ENCODE measurements at regions of chr1 and their contacts with region 1.

Region 1: GRCh38 chr1:116485071-116485735 is 85.6 kb downstream of the CD58 start:
- DNase-seq: peak; percentile 78
- ATAC-seq: peak; percentile 87
- H3K4me3 ChIP-seq: no peak overlapping the region
- H3K27ac ChIP-seq: no peak overlapping the region
- H3K4me1 ChIP-seq: peaks cover 9% of the 10 kb centered on the region
- H3K27me3 ChIP-seq: no peaks in the 10 kb centered on the region
- CTCF ChIP-seq: peak; percentile 90
- POLR2A ChIP-seq: no peak
- RAD21 ChIP-seq: peak; percentile 87

Region 2: GRCh38 chr1:116139592-116140134 is 345.5 kb before region 1 on chr1:
- CTCF ChIA-PET with region 1: interaction called, 41 read pairs
- POLR2A ChIA-PET with region 1: no interaction called
- dilution Hi-C with region 1: no loop called
- in situ Hi-C with region 1: loop called (anchors 10 kb)
- intact Hi-C with region 1: loop called (anchors 1 kb)
- DNase-seq: no peak
- ATAC-seq: no peak
- H3K4me3 ChIP-seq: no peak overlapping the region
- H3K27ac ChIP-seq: no peak overlapping the region
- H3K4me1 ChIP-seq: no peaks in the 10 kb centered on the region
- H3K27me3 ChIP-seq: no peaks in the 10 kb centered on the region; the same call in 1 of the 2 replicates
- CTCF ChIP-seq: no peak
- POLR2A ChIP-seq: no peak
- RAD21 ChIP-seq: no peak

Region 3: DNA sequence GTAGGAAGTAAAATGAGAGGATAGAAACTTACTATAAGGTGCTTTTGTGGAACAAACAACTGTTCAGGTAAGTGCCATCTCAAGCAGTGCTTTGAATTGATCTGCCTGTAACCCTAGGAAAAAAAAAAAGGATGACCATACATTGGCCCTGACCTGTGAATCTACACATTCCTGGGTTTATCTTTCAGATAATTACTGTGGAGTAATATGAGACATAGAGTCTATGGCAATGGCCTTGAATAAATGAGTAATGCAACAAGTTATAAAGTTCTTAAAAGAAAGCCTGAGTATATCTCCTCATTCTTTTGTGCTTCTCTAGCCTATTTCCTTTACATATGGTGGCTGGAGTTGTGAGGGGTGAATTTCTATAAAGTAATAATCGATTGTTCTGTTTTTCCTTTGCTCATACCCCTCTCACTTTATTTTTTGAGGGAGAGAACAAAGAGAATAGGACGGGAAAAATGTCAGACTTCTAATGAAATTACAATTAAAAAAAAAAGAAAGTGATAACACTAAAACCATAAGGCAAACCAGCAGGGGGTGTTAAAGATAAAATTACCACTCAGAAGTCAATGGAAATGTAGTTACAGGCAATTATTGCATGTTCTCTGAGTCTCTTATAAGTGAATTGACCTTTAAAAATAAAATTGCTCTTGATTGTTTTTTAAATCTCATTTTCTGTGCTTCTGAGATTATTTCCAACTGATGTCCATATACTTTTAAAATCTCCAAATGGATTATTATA is 124.6 kb before region 1 on chr1:
- CTCF ChIA-PET with region 1: interaction called, 8 read pairs
- POLR2A ChIA-PET with region 1: no interaction called
- dilution Hi-C with region 1: no loop called
- in situ Hi-C with region 1: no loop called
- intact Hi-C with region 1: loop called (anchors 2 kb)
- DNase-seq: peak; percentile 17
- ATAC-seq: no peak
- H3K4me3 ChIP-seq: no peak overlapping the region
- H3K27ac ChIP-seq: no peak overlapping the region
- H3K4me1 ChIP-seq: peaks cover 5% of the 10 kb centered on the region; the same call in 1 of the 2 replicates
- H3K27me3 ChIP-seq: peaks cover 7% of the 10 kb centered on the region
- CTCF ChIP-seq: peak; percentile 47
- POLR2A ChIP-seq: no peak
- RAD21 ChIP-seq: peak; percentile 34

Region 4: DNA sequence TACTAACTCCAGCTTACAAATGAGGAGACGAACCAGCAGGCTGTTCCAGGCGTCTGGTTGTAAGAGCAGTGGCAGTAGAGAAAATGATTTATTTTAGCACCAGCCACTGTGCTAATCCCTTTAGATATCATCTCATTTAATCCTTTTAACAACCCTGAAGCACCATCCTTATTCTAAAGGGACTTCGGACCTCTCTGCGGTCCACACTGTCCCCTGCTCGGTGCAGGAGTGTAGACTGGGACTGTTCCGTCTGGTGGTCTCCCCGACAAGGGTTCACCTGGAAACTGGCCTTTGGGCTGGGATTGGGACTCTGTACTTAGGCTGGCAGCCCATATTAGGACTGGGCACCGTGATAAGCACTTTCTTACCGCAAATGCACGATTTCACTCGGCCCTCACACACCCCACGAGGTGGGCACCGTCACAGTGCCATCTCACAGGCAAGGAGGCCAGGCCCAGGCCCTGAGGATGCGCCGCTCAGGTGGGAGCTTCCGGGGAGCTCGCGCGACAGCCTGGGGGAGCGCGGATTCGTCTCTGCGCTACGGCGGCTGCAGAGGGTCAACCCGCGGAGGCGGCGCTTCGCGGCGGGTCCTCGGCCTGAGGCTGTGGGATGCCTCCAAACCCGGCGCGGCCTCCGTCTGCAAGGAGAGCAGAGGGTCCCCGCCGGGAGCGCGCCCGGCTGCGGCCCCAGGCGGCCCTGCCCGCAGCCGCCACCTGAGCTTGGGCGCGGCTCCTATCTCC is 66.9 kb before region 1 on chr1:
- CTCF ChIA-PET with region 1: no interaction called
- POLR2A ChIA-PET with region 1: no interaction called
- dilution Hi-C with region 1: no loop called
- in situ Hi-C with region 1: no loop called
- intact Hi-C with region 1: loop called (anchors 5 kb)
- DNase-seq: peak; percentile 75
- ATAC-seq: peak; percentile 99
- H3K4me3 ChIP-seq: peak overlapping the region; percentile 86
- H3K27ac ChIP-seq: peak overlapping the region; percentile 62
- H3K4me1 ChIP-seq: peaks cover 7% of the 10 kb centered on the region
- H3K27me3 ChIP-seq: peaks cover 2% of the 10 kb centered on the region; the same call in 1 of the 2 replicates
- CTCF ChIP-seq: no peak
- POLR2A ChIP-seq: peak; percentile 62; the same call in 1 of the 2 replicates
- RAD21 ChIP-seq: no peak

Region 5: GRCh38 chr1:116498789-116499628 is 13.8 kb after region 1 on chr1:
- CTCF ChIA-PET with region 1: interaction called, 28 read pairs
- POLR2A ChIA-PET with region 1: no interaction called
- dilution Hi-C with region 1: no loop called
- in situ Hi-C with region 1: no loop called
- intact Hi-C with region 1: no loop called
- DNase-seq: peak; percentile 61
- ATAC-seq: peak; percentile 97
- H3K4me3 ChIP-seq: no peak overlapping the region
- H3K27ac ChIP-seq: no peak overlapping the region
- H3K4me1 ChIP-seq: peaks cover 15% of the 10 kb centered on the region
- H3K27me3 ChIP-seq: no peaks in the 10 kb centered on the region
- CTCF ChIP-seq: peak; percentile 94
- POLR2A ChIP-seq: no peak
- RAD21 ChIP-seq: peak; percentile 92

Measured in IMR-90 (cell line).